Mammary epithelial cell (primary cell): ENCODE measurements at regions of chr13 and their contacts with region 1.

Region 1: DNA sequence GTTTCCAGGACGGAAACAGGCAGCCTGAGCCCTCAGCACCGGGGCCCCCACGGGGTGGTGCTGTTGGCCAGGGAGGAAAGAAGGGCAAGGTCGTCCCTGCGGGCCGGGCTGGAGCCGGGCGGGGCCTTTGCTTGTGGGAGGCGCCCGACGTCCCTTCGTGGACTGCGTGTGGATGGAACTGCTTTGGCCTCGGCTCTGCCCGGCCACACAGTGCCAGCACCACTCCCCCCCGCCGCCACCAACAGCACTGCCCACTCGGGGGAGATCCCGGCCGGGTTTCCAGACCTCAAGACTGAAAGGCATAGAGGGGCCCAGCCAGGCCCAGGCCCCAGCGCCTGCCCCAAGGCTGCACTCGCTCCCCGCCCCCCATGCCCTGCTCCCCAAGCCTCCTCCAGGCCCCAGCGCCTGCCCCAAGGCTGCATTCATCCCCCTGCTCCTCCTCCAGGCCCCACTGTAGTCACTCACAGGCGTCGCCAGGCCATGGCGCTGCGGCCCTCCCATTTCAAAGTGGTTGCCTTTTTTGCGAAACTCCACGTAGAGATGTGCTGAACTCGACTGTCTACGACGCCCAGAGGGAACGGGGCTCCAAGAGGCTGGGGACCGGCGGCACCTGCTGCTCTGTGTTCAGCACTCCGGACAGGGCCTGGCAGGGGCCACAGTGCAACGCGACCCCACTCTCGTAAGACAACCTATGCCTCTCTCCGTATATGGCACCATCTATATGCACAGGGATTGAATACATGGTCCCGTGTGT is 22.5 kb downstream of the C13orf46 start:
- DNase-seq: peak; percentile 68
- H3K4me3 ChIP-seq: no peak overlapping the region
- H3K27ac ChIP-seq: no peak overlapping the region
- H3K4me1 ChIP-seq: peaks cover 17% of the 10 kb centered on the region
- H3K27me3 ChIP-seq: no peaks in the 10 kb centered on the region
- CTCF ChIP-seq: peak; percentile 74 to 98

Region 2: GRCh38 chr13:113620036-113620796 is 331.2 kb before region 1 on chr13:
- CTCF ChIA-PET with region 1: no interaction called
- dilution Hi-C with region 1: no loop called
- in situ Hi-C with region 1: no loop called
- intact Hi-C with region 1: loop called (anchors 1 kb)
- DNase-seq: no peak
- H3K4me3 ChIP-seq: no peak overlapping the region
- H3K27ac ChIP-seq: no peak overlapping the region
- H3K4me1 ChIP-seq: no peaks in the 10 kb centered on the region
- H3K27me3 ChIP-seq: no peaks in the 10 kb centered on the region
- CTCF ChIP-seq: no peak

Region 3: GRCh38 chr13:113837554-113838355 is 113.7 kb before region 1 on chr13:
- CTCF ChIA-PET with region 1: no interaction called
- dilution Hi-C with region 1: no loop called
- in situ Hi-C with region 1: no loop called
- intact Hi-C with region 1: loop called (anchors 1 kb)
- DNase-seq: peak; percentile 98
- H3K4me3 ChIP-seq: peak overlapping the region in 2 of 3 experiments; percentile 48 to 50
- H3K27ac ChIP-seq: peak overlapping the region; percentile 95
- H3K4me1 ChIP-seq: peaks cover 47% of the 10 kb centered on the region
- H3K27me3 ChIP-seq: no peaks in the 10 kb centered on the region
- CTCF ChIP-seq: no peak

Region 4: GRCh38 chr13:113904411-113904810 is 47.0 kb before region 1 on chr13:
- CTCF ChIA-PET with region 1: no interaction called
- dilution Hi-C with region 1: no loop called
- in situ Hi-C with region 1: no loop called
- intact Hi-C with region 1: loop called (anchors 2 kb)
- DNase-seq: no peak
- H3K4me3 ChIP-seq: no peak overlapping the region
- H3K27ac ChIP-seq: no peak overlapping the region
- H3K4me1 ChIP-seq: peaks cover 4% of the 10 kb centered on the region
- H3K27me3 ChIP-seq: no peaks in the 10 kb centered on the region
- CTCF ChIP-seq: peak; percentile 45 to 69

Region 5: DNA sequence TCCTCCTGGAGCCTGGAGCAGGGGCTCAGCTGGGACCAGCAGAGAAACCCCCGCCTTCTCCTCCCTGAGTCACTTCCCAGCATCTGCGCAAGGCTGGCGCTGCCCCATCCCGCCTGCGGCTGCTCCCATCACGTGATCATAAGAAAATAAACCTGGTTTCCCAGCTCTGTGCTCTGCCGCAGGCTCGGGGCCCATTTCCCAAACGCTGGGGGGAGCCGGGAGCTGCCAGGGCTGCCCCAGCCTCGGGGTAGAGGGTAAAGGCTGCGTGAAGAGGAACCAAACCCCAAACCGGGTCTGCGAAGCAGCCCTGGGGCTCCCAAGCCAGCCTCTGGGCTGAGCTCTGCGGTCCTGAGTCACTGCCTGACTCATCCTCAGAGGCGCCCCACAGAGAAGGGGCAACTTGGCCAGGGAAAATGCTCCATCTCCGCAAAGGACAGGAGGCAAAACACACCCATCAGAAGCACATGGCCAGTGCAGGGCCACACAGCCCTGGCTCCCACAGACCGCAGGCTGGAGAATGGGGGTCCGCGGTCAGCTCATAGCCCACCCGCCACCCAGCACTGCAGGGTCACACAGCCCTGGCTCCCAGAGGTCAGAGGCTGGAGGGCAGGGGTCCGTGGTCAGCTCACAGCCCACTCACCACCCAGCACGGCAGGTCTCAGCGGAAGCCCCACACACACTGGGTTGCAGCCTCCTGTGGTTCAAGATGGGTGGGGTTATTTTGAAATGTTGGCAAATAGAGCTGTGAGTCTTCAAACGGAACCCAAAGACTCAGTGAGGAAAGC is 113.9 kb after region 1 on chr13:
- CTCF ChIA-PET with region 1: no interaction called
- dilution Hi-C with region 1: no loop called
- in situ Hi-C with region 1: no loop called
- intact Hi-C with region 1: loop called (anchors 2 kb)
- DNase-seq: peak; percentile 98
- H3K4me3 ChIP-seq: peak overlapping the region in 1 of 3 experiments; percentile 40
- H3K27ac ChIP-seq: peak overlapping the region; percentile 83
- H3K4me1 ChIP-seq: peaks cover 37% of the 10 kb centered on the region
- H3K27me3 ChIP-seq: no peaks in the 10 kb centered on the region
- CTCF ChIP-seq: no peak

Region 6: GRCh38 chr13:114151565-114152284 is 200.3 kb after region 1 on chr13:
- CTCF ChIA-PET with region 1: no interaction called
- dilution Hi-C with region 1: no loop called
- in situ Hi-C with region 1: no loop called
- intact Hi-C with region 1: loop called (anchors 1 kb)
- DNase-seq: peak; percentile 88
- H3K4me3 ChIP-seq: no peak overlapping the region
- H3K27ac ChIP-seq: no peak overlapping the region
- H3K4me1 ChIP-seq: peaks cover 14% of the 10 kb centered on the region
- H3K27me3 ChIP-seq: no peaks in the 10 kb centered on the region
- CTCF ChIP-seq: peak in 1 of 2 donors; percentile 37